Ascending aorta (tissue), 2 donors: ENCODE measurements at regions of chr5 and their contacts with region 1.

Region 1: GRCh38 chr5:124748687-124749594 is 2.5 kb upstream of the ZNF608 start:
- DNase-seq: peak; percentile 31 to 79
- H3K4me3 ChIP-seq: peak overlapping the region; percentile 55 to 70
- H3K27ac ChIP-seq: peak overlapping the region; percentile 84 to 93
- H3K4me1 ChIP-seq: no peaks in the 10 kb centered on the region
- H3K27me3 ChIP-seq: no peaks in the 10 kb centered on the region
- CTCF ChIP-seq: no peak

Region 2: DNA sequence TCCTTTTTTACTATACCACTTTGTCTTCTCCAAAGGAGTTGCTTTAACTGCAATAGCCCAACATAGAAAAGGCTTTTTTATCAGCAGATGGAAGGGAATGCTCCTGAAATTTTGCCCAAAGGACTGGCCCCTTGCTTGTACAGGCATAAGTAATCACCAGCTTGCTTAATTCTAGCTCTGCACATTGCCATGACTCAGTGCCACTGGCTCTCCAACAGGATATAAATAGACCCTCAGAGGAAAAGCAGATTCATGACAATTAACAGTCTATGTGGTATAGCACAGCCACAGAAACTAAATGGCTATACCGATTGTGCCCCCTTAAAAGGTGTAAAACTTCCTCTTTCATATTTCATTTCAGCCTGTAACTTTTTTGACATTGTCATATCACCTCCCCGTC is 229.5 kb before region 1 on chr5:
- intact Hi-C with region 1: loop called (anchors 10 kb)
- DNase-seq: peak in 1 of 2 donors; percentile 81
- H3K4me3 ChIP-seq: no peak overlapping the region
- H3K27ac ChIP-seq: peak overlapping the region in 1 of 2 donors; percentile 27
- H3K4me1 ChIP-seq: peaks cover 4 to 15% of the 10 kb centered on the region in 2 donors
- H3K27me3 ChIP-seq: no peaks in the 10 kb centered on the region
- CTCF ChIP-seq: no peak

Region 3: DNA sequence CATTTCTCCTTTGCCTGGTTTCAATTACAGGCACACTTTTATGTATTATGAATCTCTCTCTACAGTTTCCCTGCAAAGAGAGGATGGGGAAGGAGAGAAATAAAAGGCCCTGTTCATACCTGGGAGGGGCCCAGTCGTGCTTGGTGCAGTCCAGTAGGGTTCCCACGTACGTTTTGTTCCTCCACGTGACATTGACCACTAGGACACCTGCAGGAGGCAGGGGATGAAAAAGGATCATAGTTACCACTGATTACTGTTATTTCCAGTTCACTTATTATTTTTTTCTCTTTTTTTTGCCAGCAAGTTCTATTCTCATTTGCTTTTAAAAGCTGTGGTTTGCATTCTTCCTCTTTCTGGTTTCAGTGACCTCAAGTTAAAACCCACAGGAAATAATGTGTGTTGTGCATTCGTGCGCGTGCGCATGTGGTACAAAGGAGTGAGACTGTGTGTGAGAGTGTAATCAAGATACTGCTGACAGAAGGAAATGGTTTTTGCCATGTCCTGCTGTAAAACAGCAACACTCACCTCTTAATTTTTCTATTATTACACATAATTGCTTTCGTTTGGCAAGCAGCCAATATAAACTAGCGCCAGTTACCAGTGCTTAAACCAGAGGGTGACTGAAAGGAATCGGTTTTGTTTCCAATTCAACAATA is 99.3 kb before region 1 on chr5:
- intact Hi-C with region 1: loop called (anchors 5 kb)
- DNase-seq: peak; percentile 46 to 78
- H3K4me3 ChIP-seq: peak overlapping the region; percentile 19 to 55
- H3K27ac ChIP-seq: peak overlapping the region in 1 of 2 donors; percentile 38
- H3K4me1 ChIP-seq: peaks cover 6 to 10% of the 10 kb centered on the region in 2 donors
- H3K27me3 ChIP-seq: no peaks in the 10 kb centered on the region
- CTCF ChIP-seq: no peak

Region 4: GRCh38 chr5:124697933-124698591 is 50.9 kb before region 1 on chr5:
- intact Hi-C with region 1: loop called (anchors 5 kb)
- DNase-seq: no peak
- H3K4me3 ChIP-seq: peak overlapping the region in 1 of 2 donors; percentile 39
- H3K27ac ChIP-seq: peak overlapping the region; percentile 76 to 81
- H3K4me1 ChIP-seq: peaks cover 3 to 10% of the 10 kb centered on the region in 2 donors
- H3K27me3 ChIP-seq: no peaks in the 10 kb centered on the region
- CTCF ChIP-seq: no peak

Region 5: DNA sequence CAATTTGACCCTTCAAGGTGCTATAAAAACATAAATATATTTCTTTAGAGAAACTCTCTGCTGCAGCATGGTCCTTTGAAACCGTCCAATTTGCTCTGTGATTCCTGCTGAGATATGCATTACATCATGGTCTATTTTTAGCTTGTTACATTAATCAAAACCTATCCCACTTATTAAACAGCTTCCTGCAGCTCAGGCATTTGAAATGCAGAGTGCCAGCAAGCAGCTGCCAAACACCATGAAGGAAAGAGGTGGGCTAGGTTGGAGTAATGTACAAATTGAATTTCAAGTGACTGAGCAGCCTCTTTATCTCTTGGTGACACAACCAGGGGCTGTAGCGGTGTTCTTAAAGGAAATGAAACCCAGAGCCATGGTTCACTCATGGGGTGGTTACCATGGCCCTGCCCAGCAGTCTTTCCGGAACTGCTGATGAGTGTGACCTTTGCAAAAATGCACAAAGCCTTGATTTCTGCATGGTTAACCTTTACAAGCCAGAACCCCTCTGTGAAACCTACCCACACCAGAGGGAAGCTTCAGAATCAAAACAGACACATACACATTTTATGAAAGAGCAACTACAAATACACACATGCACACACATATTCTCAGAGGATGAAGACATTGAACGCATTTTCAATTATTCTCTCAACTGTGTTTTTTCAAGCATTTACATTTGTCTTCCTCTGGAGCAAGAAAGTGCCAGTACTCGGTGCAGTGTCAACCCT is 153.3 kb after region 1 on chr5:
- intact Hi-C with region 1: loop called (anchors 2 kb)
- DNase-seq: no peak
- H3K4me3 ChIP-seq: no peak overlapping the region
- H3K27ac ChIP-seq: no peak overlapping the region
- H3K4me1 ChIP-seq: peaks cover 1 to 14% of the 10 kb centered on the region in 2 donors
- H3K27me3 ChIP-seq: no peaks in the 10 kb centered on the region
- CTCF ChIP-seq: no peak